ENCODE measurements at regions of chr10 and their contacts with region 1.

Region 1: DNA sequence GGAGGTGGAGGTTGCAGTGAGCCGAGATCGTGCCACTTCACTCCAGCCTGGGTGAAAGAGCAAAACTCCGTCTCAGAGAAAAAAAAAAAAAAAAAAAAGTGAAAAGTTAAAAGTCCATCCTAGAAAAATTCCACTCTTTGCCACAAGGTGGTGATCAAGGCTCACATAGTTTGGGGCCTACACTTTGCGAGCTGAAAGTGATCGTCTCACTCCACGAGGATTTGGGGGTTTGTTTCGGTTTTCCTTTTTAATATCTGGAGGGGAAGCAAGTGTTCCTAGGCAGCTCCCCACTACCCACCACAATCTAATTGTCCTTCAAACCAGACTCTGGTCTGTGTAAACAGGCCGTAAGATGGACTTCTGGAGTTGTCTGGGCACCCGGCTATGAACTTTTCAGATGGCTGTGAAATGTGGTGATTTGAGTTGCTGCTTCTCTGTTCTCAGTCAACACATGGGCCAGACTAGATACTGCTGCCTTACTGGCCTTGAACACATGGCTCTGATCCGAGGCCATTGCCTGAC is 27.1 kb downstream of the PRLHR start:
- ATAC-seq: peak; percentile 13 to 68 (median 56)
- H3K4me3 ChIP-seq: no peak overlapping the region
- H3K27ac ChIP-seq: no peak overlapping the region
- H3K4me1 ChIP-seq: peaks cover 0 to 10% of the 10 kb centered on the region in 2 donors

Region 2: GRCh38 chr10:118712930-118713634 is 144.7 kb after region 1 on chr10:
- in situ Hi-C with region 1: loop called in 2 of 9 experiments (anchors 10 to 25 kb)
- ATAC-seq: peak in 2 of 8 experiments; percentile 23 to 31
- H3K4me3 ChIP-seq: no peak overlapping the region
- H3K27ac ChIP-seq: no peak overlapping the region
- H3K4me1 ChIP-seq: no peaks in the 10 kb centered on the region

Region 3: GRCh38 chr10:118720685-118721538 is 152.5 kb after region 1 on chr10:
- in situ Hi-C with region 1: loop called in 3 of 9 experiments (anchors 10 to 25 kb)
- ATAC-seq: peak in 4 of 8 experiments; percentile 48 to 59 (median 54)
- H3K4me3 ChIP-seq: no peak overlapping the region
- H3K27ac ChIP-seq: no peak overlapping the region
- H3K4me1 ChIP-seq: peaks cover 3 to 4% of the 10 kb centered on the region in 2 donors

Region 4: GRCh38 chr10:119006451-119007210 is 438.2 kb after region 1 on chr10:
- in situ Hi-C with region 1: loop called in 1 of 9 experiments (anchors 25 kb)
- ATAC-seq: peak in 4 of 8 experiments; percentile 58 to 85 (median 71)
- H3K4me3 ChIP-seq: no peak overlapping the region
- H3K27ac ChIP-seq: no peak overlapping the region
- H3K4me1 ChIP-seq: no peaks in the 10 kb centered on the region

Measured in motor neuron (in vitro differentiated cells).